Heart left ventricle (tissue), 16 donors: ENCODE measurements at regions of chr20 and their contacts with region 1.

Region 1: DNA sequence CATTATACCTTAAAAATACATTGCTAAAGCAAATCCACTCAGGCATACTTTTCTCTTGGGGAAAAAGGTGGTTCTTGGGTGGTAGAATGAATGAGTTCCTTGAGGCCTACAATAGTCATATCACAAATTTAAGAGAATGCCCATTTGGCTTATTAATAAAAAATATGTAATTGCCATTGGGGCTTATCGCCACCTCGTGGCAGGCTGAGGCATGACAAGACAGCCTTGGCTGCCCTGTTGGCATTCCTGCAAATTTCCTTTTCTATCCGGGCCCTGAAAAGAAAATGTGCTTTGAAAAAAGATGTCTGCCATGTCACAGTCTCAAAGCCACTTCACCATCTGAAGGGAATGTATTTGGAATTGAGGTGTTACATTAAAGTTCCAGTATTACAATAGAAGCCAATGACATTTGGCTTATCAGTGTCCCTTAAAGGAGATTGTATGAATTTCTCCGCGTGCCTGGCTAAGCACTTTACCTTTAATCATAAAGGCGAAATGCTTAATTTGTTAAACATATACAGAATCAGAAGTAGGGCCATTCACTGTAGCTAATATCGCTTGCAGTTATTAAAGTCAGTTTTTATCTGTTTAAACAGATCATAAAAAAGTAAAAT is 188.3 kb upstream of the ZFP64 start:
- DNase-seq: peak in 2 of 5 donors; percentile 30 to 60
- ATAC-seq: no peak
- H3K4me3 ChIP-seq: no peak overlapping the region
- H3K27ac ChIP-seq: no peak overlapping the region
- H3K4me1 ChIP-seq: no peaks in the 10 kb centered on the region
- H3K27me3 ChIP-seq: no peaks in the 10 kb centered on the region
- CTCF ChIP-seq: peak; percentile 79 to 95 (median 86)
- POLR2A ChIP-seq: no peak

Region 2: GRCh38 chr20:52242237-52243230 is 137.3 kb before region 1 on chr20:
- intact Hi-C with region 1: loop called in 6 of 10 experiments (anchors 5 to 10 kb)
- DNase-seq: no peak
- ATAC-seq: no peak
- H3K4me3 ChIP-seq: no peak overlapping the region
- H3K27ac ChIP-seq: no peak overlapping the region
- H3K4me1 ChIP-seq: no peaks in the 10 kb centered on the region
- H3K27me3 ChIP-seq: peaks cover 0 to 4% (median 0%) of the 10 kb centered on the region in 9 donors
- CTCF ChIP-seq: peak; percentile 42 to 88 (median 68)
- POLR2A ChIP-seq: no peak

Region 3: DNA sequence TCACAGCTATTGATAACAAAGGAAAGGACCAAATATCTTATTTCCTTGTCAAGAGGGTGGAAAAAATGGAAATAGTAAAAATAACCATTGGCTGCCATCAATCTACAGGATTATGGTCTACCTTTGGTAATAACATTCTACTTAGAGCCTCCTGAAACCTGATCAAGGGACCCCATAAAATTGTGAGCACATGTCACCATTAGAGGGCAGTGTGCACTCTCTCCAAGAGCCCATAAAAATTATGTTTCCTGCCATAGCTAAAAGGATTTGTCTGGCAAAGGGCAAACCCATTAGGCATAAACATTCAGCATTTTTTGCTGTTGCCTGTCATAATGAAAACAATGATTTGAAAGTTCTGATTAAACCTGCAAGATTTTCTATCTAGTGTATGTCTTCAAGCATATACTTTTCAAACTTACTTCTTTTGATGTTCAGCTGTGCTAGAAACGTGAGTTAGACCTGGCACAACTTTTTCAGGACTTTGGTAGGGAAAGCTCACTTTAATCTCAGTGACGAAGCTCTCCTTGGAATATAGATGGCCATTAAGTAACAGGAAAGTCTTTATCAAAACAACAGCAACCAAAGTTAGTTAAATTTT is 67.6 kb before region 1 on chr20:
- intact Hi-C with region 1: loop called in 7 of 10 experiments (anchors 1 to 5 kb)
- DNase-seq: peak in 2 of 5 donors; percentile 25 to 29
- ATAC-seq: peak in 3 of 4 donors; percentile 56 to 67 (median 64)
- H3K4me3 ChIP-seq: no peak overlapping the region
- H3K27ac ChIP-seq: no peak overlapping the region
- H3K4me1 ChIP-seq: peaks cover 0 to 9% (median 0%) of the 10 kb centered on the region in 12 donors
- H3K27me3 ChIP-seq: peaks cover 0 to 7% (median 0%) of the 10 kb centered on the region in 9 donors
- CTCF ChIP-seq: peak; percentile 55 to 84 (median 71)
- POLR2A ChIP-seq: no peak

Region 4: GRCh38 chr20:52923123-52923937 is 543.5 kb after region 1 on chr20:
- intact Hi-C with region 1: no loop called
- DNase-seq: no peak
- ATAC-seq: peak in 1 of 4 donors; percentile 18
- H3K4me3 ChIP-seq: no peak overlapping the region
- H3K27ac ChIP-seq: no peak overlapping the region
- H3K4me1 ChIP-seq: peaks cover 0 to 3% (median 0%) of the 10 kb centered on the region in 12 donors
- H3K27me3 ChIP-seq: no peaks in the 10 kb centered on the region
- CTCF ChIP-seq: no peak
- POLR2A ChIP-seq: no peak